ENCODE measurements at regions of chr18 and their contacts with region 1.

Region 1: GRCh38 chr18:5237723-5238370 is 40.8 kb upstream of the AKAIN1 start:
- DNase-seq: peak; percentile 93
- ATAC-seq: peak; percentile 99

Region 2: GRCh38 chr18:5295981-5296705 is 58.3 kb after region 1 on chr18:
- intact Hi-C with region 1: loop called (anchors 2 kb)
- DNase-seq: peak; percentile 98
- ATAC-seq: peak; percentile 91